ENCODE measurements at regions of chr20 and their contacts with region 1.

Region 1: DNA sequence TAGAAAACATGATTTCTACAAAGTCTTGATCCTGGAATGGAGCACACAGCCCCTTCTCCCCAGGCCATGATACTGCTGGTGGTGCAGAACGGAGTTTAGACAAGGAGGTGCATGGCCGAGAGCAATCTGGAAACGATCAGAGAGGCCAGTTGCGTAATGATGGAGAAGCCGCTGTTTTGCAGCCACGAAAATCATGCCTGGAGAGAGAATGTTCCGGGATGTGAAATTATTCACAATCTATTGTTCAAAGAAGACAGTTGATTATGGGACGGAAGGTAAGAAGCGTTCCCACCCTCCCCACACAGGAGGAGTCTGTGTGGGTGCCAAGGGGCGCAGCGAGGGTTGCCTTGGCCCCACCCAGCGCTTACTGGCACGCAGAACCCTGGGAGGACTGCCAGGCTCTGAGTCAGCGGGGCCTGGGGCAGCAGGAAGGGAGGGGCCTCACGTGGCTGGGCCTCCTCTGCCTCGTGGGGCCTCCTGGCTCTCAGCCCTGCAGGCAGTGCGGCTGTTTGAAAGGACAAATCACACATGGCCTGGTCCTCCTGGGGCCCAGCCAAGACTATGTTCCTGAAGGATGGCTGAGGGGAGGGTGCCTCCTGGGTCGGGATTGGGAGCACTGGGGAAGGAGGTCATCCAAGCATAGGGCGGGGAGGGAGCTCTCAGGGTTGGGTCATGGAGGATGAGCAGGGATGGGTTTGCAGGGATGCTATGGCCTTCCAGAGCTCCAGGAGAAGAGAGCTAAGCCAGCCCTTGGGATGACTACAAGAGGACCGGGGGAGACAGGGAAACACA is 8.7 kb upstream of the AP5S1 start:
- DNase-seq: peak; percentile 100
- H3K4me3 ChIP-seq: peak overlapping the region; percentile 31 to 47 (median 40)
- H3K27ac ChIP-seq: peak overlapping the region; percentile 86 to 93 (median 91)
- H3K4me1 ChIP-seq: peaks cover 0 to 62% (median 56%) of the 10 kb centered on the region in 4 donors
- H3K27me3 ChIP-seq: no peaks in the 10 kb centered on the region
- CTCF ChIP-seq: no peak
- EP300 ChIP-seq: peak; percentile 86 to 96 (median 92)
- POLR2A ChIP-seq: peak; percentile 84

Region 2: DNA sequence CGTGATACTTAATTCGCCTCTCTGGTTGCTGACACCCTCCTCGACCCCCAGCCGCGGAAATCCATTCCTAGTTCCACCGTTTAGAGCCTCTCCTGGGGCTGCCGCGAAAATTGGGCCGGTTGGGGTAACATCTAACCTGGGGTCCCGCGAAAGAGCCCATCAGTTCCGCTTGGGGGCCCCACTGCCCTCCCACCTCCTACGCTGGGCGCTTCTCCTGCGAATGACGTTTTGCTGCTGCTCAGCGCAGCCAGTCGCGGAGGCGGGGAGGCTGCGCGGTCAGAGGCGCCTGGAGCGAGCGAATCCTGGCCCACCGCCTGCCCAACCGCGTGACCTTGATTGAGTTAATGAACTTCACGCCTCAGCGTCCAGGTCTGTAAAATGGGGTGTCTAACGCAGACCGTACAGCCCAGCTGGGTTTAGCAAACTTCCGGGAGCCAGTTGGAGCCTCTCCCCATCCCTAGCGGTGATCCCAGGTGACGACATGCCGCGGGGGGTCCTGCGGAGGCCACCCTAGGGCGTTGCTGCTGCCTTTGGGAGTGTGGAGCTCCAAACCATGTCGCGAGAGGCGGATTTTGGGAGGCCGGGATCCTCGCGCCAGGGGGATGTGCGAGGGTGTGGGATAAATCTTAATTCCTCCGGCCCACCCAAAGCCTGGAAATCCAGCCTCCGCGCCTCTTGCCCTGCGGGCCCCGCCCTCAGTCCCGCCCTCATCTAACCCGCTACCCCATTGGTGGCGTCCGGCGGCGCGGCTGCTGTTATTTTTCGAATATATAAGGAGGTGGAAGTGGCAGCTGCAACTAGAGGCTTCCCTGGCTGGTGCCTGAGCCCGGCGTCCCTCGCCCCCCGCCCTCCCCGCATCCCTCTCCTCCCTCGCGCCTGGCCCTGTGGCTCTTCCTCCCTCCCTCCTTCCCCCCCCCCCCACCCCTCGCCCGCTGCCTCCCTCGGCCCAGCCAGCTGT is 15.9 kb before region 1 on chr20 and contains the start of gene CDC25B:
- intact Hi-C with region 1: loop called (anchors 2 kb)
- DNase-seq: peak; percentile 98
- H3K4me3 ChIP-seq: peak within 1 kb of the TSS; percentile 44 to 79 (median 70)
- H3K27ac ChIP-seq: peak within 1 kb of the TSS; percentile 96 to 99 (median 98)
- H3K4me1 ChIP-seq: peaks cover 0 to 50% (median 44%) of the 10 kb centered on the region in 4 donors
- H3K27me3 ChIP-seq: no peaks in the 10 kb centered on the region
- CTCF ChIP-seq: peak; percentile 41 to 86 (median 82)
- EP300 ChIP-seq: peak in 1 of 4 donors; percentile 1
- POLR2A ChIP-seq: peak; percentile 34 to 51
- total RNA-seq, gene CDC25B: 18.9 to 59.8 (median 26.9) TPM